HCT116 (cell line): ENCODE measurements at regions of chr2 and their contacts with region 1.

Region 1: DNA sequence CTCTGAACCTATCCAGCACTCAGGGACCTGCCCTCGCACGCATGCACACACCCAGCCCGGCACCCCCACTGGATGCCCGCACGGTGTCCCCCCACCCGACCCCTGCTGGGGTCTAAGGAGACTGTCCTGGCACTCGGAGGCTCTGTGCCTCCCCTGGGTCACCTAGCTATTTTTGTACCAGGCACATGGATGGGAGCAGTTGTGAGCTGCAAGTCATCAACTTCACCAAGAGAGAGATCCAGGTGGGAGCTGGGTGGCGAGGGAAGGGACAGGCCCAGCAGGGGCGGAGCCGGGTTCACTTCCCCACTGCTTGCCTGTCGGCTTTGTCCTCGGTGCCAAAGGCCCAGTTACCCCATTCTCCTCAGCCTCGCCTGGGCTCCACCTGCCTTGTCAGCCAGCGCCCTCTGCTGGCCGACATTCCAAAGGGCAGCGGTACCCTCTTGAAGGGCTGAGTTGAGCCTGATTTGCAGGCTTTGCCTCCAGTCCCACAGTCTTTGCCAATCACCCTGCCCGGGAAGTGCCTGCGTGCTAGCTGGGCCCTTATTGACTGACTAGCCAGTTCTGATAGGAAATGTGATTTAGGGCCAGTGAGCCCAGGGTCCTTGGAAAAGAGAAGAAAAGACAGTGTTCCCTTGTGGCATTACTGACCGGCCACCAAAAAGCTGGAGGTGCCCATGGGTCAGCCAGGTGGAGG is 5.8 kb downstream of the NT5DC4 start:
- DNase-seq: peak; percentile 89
- ATAC-seq: peak; percentile 89
- H3K4me3 ChIP-seq: peak overlapping the region in 1 of 2 experiments; percentile 23; a peak in 1 of 4 replicates
- H3K27ac ChIP-seq: peak overlapping the region; percentile 40; the same call in 1 of the 2 replicates
- H3K4me1 ChIP-seq: peaks cover 13 to 29% of the 10 kb centered on the region in 2 experiments
- H3K27me3 ChIP-seq: no peaks in the 10 kb centered on the region
- CTCF ChIP-seq: peak; percentile 95 to 98 (median 96)
- POLR2A ChIP-seq: no peak
- RAD21 ChIP-seq: peak; percentile 100

Region 2: DNA sequence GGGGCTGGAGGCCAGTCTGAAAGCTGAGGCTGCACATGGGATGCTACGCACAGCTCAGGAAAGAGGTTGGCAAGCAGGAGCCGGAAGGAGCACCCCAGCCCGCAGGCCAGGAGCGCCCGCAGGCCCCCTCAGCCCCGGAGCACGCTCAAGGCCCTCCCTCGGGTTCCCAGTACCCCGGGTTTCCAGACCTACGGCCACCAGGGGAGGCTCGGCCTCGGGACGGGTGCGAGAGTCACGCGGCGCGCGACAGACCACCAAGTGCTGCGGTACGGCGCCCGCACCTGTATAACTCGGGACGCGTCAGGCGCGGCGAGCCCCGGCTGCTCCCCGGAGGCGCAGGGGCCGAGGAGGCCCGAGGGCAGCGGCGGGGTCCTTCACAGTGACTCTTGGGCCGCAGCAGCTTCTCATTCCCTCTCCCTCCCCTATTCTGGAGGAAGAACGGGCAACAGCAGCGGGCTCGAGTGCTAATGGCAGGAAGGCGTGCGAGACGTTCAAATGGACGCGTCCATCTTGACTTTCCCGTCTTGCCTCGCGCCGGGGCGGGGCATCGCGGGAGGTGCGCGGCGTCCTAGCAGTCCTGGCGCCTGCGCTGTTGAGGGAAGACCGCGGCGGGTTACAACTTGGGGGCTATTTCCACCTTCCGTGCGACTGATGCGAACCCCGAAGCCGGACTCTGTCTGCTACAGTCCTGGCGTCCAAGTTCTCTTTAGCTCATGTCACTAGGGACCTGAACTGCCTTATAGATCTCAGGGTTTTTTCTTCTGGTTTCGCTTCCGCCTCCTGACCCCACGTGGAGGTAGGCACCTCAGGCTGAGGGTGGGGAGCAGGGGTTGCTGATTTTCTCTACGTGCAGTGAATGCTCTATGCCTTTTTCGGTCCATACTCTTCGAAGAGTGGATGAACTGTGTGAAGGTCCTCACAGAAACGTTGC is 842.7 kb before region 1 on chr2 and contains the start of gene ANAPC1:
- CTCF ChIA-PET with region 1: no interaction called
- POLR2A ChIA-PET with region 1: no interaction called
- RAD21 ChIA-PET with region 1: no interaction called
- intact Hi-C with region 1: loop called (anchors 5 kb)
- DNase-seq: peak; percentile 61
- ATAC-seq: peak; percentile 92
- H3K4me3 ChIP-seq: peak within 1 kb of the TSS; percentile 96 to 99
- H3K27ac ChIP-seq: peak within 1 kb of the TSS; percentile 97
- H3K4me1 ChIP-seq: peaks cover 0 to 5% of the 10 kb centered on the region in 2 experiments; a peak in 1 of 4 replicates
- H3K27me3 ChIP-seq: no peaks in the 10 kb centered on the region
- CTCF ChIP-seq: no peak
- POLR2A ChIP-seq: peak; percentile 94
- RAD21 ChIP-seq: no peak
- total RNA-seq, gene ANAPC1: 76.5 TPM

Region 3: GRCh38 chr2:112584134-112584890 is 142.3 kb before region 1 on chr2 and contains the start of gene CHCHD5:
- CTCF ChIA-PET with region 1: interaction called, 29 read pairs
- POLR2A ChIA-PET with region 1: interaction called, 14 read pairs
- RAD21 ChIA-PET with region 1: interaction called, 3 to 10 read pairs
- intact Hi-C with region 1: loop called (anchors 5 kb)
- DNase-seq: peak; percentile 92
- ATAC-seq: peak; percentile 88
- H3K4me3 ChIP-seq: peak within 1 kb of the TSS; percentile 89 to 91
- H3K27ac ChIP-seq: peak within 1 kb of the TSS; percentile 96
- H3K4me1 ChIP-seq: peaks cover 15 to 28% of the 10 kb centered on the region in 2 experiments
- H3K27me3 ChIP-seq: no peaks in the 10 kb centered on the region
- CTCF ChIP-seq: peak in 1 of 3 experiments; percentile 14; a peak in 1 of 6 replicates
- POLR2A ChIP-seq: peak; percentile 62
- RAD21 ChIP-seq: no peak
- total RNA-seq, gene CHCHD5: 49.8 TPM

Region 4: DNA sequence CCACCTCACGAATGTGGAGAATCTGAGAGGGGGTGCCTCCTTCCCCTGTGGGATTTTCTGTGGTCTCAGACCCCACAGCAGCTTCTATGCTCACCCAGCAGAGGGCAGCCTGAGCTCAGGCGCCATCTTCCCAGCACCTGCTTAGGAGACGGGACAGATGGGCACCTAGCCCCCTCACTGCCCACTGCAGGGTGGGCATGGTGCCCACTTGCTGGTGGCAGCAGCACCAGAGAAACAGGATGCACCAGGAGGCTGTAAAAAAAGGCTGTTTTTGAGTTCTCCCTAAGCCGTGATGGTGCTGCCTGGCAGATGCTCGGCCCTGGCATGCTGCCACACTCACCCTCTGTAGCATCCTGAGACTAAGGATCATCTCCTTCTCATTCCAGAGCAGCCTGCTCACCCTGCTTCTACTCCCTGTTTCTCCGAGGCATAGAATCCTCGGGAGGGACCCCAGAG is 100.0 kb before region 1 on chr2:
- CTCF ChIA-PET with region 1: interaction called, 100 read pairs
- POLR2A ChIA-PET with region 1: interaction called, 22 read pairs
- RAD21 ChIA-PET with region 1: interaction called, 8 to 35 read pairs
- intact Hi-C with region 1: loop called (anchors 1 kb)
- DNase-seq: no peak
- ATAC-seq: peak; percentile 75
- H3K4me3 ChIP-seq: peak overlapping the region in 1 of 2 experiments; percentile 38; a peak in 3 of 4 replicates
- H3K27ac ChIP-seq: peak overlapping the region; percentile 49
- H3K4me1 ChIP-seq: peaks cover 56 to 100% of the 10 kb centered on the region in 2 experiments
- H3K27me3 ChIP-seq: no peaks in the 10 kb centered on the region
- CTCF ChIP-seq: peak; percentile 91 to 96 (median 95)
- POLR2A ChIP-seq: no peak
- RAD21 ChIP-seq: peak; percentile 97

Region 5: GRCh38 chr2:112737542-112738232 is 11.0 kb after region 1 on chr2:
- CTCF ChIA-PET with region 1: interaction called, 18 read pairs
- POLR2A ChIA-PET with region 1: interaction called, 4 read pairs
- RAD21 ChIA-PET with region 1: interaction called in 1 of 2 experiments, 3 read pairs
- intact Hi-C with region 1: no loop called
- DNase-seq: no peak
- ATAC-seq: no peak
- H3K4me3 ChIP-seq: peak overlapping the region in 1 of 2 experiments; percentile 5; a peak in 1 of 4 replicates
- H3K27ac ChIP-seq: no peak overlapping the region
- H3K4me1 ChIP-seq: peaks cover 15 to 23% of the 10 kb centered on the region in 2 experiments
- H3K27me3 ChIP-seq: no peaks in the 10 kb centered on the region
- CTCF ChIP-seq: no peak
- POLR2A ChIP-seq: no peak
- RAD21 ChIP-seq: no peak

Region 6: DNA sequence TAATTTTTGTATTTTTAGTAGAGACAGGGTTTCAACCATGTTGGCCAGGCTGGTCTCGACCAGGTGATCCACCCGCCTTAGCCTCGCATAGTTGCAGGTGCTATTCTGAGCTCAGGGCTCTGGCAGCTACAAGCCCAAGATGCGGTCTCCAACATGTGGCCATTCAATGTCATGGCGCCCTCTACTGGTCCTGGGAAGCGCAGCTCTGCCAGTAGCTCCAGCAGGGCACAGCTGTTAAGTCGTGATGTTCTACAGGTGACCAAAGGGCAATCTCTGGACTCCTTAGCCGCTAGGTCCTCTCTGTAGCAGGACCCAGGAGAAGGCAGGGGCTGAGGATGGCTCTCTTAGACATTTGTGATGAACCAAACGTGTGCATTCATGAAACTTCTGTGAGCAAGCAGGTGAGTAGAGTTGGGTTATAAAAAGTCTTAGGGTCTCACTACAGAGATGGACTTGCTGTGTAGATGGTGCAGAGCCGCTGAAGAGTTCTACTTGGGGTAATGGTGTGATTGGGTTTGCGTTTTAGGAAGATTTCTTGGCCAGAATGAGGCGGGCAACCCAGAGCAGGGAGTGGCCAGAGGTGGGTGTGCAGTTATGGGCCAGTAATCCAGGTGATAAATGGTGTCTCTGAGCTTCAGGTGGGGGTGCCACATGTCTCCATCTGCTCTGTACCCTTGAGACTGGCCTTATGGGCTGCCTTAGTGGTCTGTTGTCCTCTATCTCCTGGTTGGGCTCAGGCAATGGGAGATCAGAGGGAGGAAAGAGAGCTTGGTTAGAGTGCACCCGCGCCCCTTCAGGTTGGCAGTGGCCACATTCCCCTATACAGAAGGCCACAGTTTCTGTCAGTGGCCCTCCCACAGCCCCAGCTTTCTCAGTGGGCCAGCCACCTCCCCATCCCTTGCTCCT is 215.4 kb after region 1 on chr2:
- CTCF ChIA-PET with region 1: interaction called, 41 read pairs
- POLR2A ChIA-PET with region 1: no interaction called
- RAD21 ChIA-PET with region 1: interaction called, 5 to 8 read pairs
- intact Hi-C with region 1: no loop called
- DNase-seq: peak; percentile 64
- ATAC-seq: peak; percentile 97
- H3K4me3 ChIP-seq: no peak overlapping the region
- H3K27ac ChIP-seq: no peak overlapping the region
- H3K4me1 ChIP-seq: peaks cover 5 to 17% of the 10 kb centered on the region in 2 experiments
- H3K27me3 ChIP-seq: no peaks in the 10 kb centered on the region
- CTCF ChIP-seq: peak; percentile 75 to 96 (median 93)
- POLR2A ChIP-seq: no peak
- RAD21 ChIP-seq: peak; percentile 93